Activated CD4-positive, alpha-beta T cell treated with anti-CD3 and anti-CD28 coated beads for 36 hours (primary cell): ENCODE measurements at regions of chr19 and their contacts with region 1.

Region 1: DNA sequence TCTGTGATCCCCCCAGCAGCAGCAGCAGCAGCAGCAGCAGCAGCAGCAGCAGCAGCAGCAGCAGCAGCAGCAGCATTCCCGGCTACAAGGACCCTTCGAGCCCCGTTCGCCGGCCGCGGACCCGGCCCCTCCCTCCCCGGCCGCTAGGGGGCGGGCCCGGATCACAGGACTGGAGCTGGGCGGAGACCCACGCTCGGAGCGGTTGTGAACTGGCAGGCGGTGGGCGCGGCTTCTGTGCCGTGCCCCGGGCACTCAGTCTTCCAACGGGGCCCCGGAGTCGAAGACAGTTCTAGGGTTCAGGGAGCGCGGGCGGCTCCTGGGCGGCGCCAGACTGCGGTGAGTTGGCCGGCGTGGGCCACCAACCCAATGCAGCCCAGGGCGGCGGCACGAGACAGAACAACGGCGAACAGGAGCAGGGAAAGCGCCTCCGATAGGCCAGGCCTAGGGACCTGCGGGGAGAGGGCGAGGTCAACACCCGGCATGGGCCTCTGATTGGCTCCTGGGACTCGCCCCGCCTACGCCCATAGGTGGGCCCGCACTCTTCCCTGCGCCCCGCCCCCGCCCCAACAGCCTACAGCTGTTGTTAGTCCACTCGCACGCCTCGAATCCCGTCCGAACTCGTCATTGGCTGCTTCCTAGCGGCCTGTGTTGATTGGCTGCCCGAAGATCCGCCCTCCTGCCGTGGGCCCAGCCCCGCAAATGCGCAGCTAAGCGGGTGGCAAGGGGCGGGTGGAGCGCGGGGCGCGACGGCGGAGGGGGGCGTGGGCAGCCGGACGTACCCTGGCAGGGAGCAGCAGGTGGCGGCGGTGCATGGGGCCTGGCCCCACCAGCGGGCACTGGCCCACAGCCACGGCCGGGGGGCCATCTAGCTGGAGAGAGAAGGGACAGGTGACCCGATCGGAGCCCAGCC is 1.4 kb upstream of the SIX5 start:
- DNase-seq: peak; percentile 93
- ATAC-seq: peak; percentile 68
- H3K4me3 Mint-ChIP-seq: peak overlapping the region; percentile 78
- H3K27ac Mint-ChIP-seq: no peak overlapping the region
- H3K4me1 Mint-ChIP-seq: peaks cover 10% of the 10 kb centered on the region
- H3K27me3 Mint-ChIP-seq: peaks cover 10% of the 10 kb centered on the region

Region 2: GRCh38 chr19:45636902-45637301 is 133.5 kb before region 1 on chr19:
- CTCF ChIA-PET with region 1: no interaction called
- POLR2A ChIA-PET with region 1: no interaction called
- intact Hi-C with region 1: no loop called
- DNase-seq: no peak
- ATAC-seq: no peak
- H3K4me3 Mint-ChIP-seq: no peak overlapping the region
- H3K27ac Mint-ChIP-seq: no peak overlapping the region
- H3K4me1 Mint-ChIP-seq: peaks cover 33% of the 10 kb centered on the region
- H3K27me3 Mint-ChIP-seq: no peaks in the 10 kb centered on the region

Region 3: GRCh38 chr19:45717166-45717982 is 53.1 kb before region 1 on chr19:
- CTCF ChIA-PET with region 1: interaction called, 9 read pairs
- POLR2A ChIA-PET with region 1: interaction called, 3 read pairs
- intact Hi-C with region 1: loop called (anchors 1 to 5 kb)
- DNase-seq: peak; percentile 99
- ATAC-seq: peak; percentile 97
- H3K4me3 Mint-ChIP-seq: peak overlapping the region; percentile 93
- H3K27ac Mint-ChIP-seq: peak overlapping the region; percentile 94
- H3K4me1 Mint-ChIP-seq: peaks cover 40% of the 10 kb centered on the region
- H3K27me3 Mint-ChIP-seq: no peaks in the 10 kb centered on the region

Region 4: GRCh38 chr19:45792470-45793177 is 22.2 kb after region 1 on chr19 and contains the start of gene DMWD:
- CTCF ChIA-PET with region 1: interaction called, 126 read pairs
- POLR2A ChIA-PET with region 1: interaction called, 11 read pairs
- intact Hi-C with region 1: loop called in 1 of 2 experiments (anchors 1 kb)
- DNase-seq: peak; percentile 100
- ATAC-seq: peak; percentile 93
- H3K4me3 Mint-ChIP-seq: peak within 1 kb of the TSS; percentile 95
- H3K27ac Mint-ChIP-seq: peak within 1 kb of the TSS; percentile 75
- H3K4me1 Mint-ChIP-seq: peaks cover 30% of the 10 kb centered on the region
- H3K27me3 Mint-ChIP-seq: peaks cover 16% of the 10 kb centered on the region
- total RNA-seq, gene DMWD: 31.1 to 35.1 TPM

Region 5: DNA sequence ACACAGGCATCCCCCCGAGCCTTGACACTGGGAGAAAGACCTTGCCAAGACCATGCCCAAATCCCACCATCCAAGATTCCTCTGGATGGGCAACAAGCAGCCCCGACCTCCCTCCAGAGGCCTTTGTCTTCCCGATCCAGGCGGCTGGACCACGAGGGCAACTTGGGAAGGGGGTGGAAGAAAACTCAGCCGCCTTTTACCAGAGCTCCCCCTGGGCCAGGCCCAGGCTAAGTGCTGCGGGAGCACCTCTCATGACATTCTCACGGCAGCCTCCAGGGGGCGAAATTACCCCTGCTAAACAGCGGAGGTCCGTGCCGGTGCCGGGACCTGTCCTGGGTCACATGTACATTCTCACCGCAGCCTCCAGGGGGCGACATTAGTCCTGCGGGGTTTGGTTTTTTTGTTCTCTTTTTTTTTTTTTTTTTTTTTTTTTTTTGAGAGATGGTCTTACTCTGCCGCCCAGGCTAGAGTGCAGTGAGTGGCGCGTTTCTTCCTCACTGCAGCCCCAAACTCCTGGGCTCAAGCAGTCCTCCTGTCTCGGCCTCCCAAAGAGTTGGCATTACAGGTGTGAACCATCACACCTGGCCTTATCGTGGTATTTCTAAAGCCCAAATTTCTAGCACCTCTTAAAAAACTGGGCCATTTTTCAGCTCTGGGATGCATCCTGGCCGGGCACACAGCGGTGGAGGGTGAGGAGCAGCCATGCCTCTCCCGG is 46.7 kb after region 1 on chr19:
- CTCF ChIA-PET with region 1: interaction called, 16 read pairs
- POLR2A ChIA-PET with region 1: interaction called, 4 read pairs
- intact Hi-C with region 1: loop called in 1 of 2 experiments (anchors 1 kb)
- DNase-seq: peak; percentile 99
- ATAC-seq: peak; percentile 100
- H3K4me3 Mint-ChIP-seq: no peak overlapping the region
- H3K27ac Mint-ChIP-seq: no peak overlapping the region
- H3K4me1 Mint-ChIP-seq: peaks cover 7% of the 10 kb centered on the region
- H3K27me3 Mint-ChIP-seq: peaks cover 10% of the 10 kb centered on the region

Region 6: DNA sequence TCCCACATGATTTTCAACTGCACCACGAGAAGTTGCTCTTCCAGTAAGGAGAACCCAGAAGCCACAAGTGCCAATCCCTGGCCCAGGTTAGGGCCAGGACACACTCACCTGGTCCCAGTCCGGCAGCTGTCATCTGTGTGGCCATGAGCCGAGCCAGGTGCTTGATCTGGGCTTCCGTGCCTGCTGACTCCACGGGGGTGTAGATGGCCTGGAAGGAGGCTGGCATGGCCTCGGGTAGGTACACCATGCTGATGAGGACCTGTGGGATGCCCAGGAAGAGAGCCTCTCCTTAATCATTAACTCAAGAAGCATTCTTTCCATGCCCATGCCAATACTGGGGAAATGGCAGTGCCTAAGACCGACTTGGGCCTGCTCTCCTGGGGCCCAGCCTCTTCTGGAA is 64.5 kb after region 1 on chr19:
- CTCF ChIA-PET with region 1: no interaction called
- POLR2A ChIA-PET with region 1: no interaction called
- intact Hi-C with region 1: no loop called
- DNase-seq: no peak
- ATAC-seq: no peak
- H3K4me3 Mint-ChIP-seq: no peak overlapping the region
- H3K27ac Mint-ChIP-seq: no peak overlapping the region
- H3K4me1 Mint-ChIP-seq: no peaks in the 10 kb centered on the region
- H3K27me3 Mint-ChIP-seq: no peaks in the 10 kb centered on the region

Region 7: GRCh38 chr19:45902651-45903625 is 132.5 kb after region 1 on chr19:
- CTCF ChIA-PET with region 1: interaction called, 6 read pairs
- POLR2A ChIA-PET with region 1: no interaction called
- intact Hi-C with region 1: loop called in 1 of 2 experiments (anchors 1 kb)
- DNase-seq: peak; percentile 100
- ATAC-seq: peak; percentile 88
- H3K4me3 Mint-ChIP-seq: peak overlapping the region; percentile 88
- H3K27ac Mint-ChIP-seq: peak overlapping the region; percentile 75
- H3K4me1 Mint-ChIP-seq: peaks cover 16% of the 10 kb centered on the region
- H3K27me3 Mint-ChIP-seq: no peaks in the 10 kb centered on the region

Region 8: DNA sequence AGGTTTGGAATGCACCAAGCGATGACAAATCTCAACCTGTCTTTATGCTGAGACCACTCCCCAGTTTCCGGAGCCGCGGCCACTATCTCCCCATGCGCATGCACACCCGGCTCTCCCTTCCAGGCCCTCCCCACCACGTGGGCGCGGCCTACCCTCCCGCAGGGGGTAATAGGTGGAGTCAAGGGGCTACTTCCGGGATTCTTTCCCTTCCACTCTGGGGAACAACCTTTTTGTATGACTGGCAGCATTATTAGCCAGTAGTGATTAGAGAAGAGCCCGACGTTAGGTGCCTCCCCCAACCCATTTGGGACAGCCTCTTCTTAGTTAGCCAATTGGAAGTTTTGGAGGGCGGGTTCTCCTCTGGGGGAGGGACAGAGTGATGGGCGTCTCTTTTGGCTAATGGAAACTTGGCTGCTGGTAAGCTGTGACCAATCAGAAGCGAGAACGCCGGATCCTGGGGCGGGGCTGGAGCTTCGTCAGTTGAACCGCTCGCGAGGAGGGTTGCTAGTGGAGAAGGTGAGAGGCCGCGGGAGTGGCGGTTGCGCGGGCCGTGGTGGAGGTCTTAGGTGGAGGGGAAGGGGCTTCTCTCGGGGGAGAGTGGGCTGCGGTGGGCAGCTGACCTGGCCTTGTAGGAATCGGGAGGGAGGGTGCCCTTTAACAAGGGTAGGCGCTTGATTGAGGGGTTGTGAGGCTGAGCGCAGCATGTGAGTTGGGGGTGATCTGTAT is 224.7 kb after region 1 on chr19 and contains the start of gene CCDC61:
- CTCF ChIA-PET with region 1: interaction called, 3 read pairs
- POLR2A ChIA-PET with region 1: no interaction called
- intact Hi-C with region 1: loop called in 1 of 2 experiments (anchors 1 kb)
- DNase-seq: peak; percentile 96
- ATAC-seq: peak; percentile 98
- H3K4me3 Mint-ChIP-seq: no peak within 1 kb of the TSS
- H3K27ac Mint-ChIP-seq: no peak within 1 kb of the TSS
- H3K4me1 Mint-ChIP-seq: peaks cover 22% of the 10 kb centered on the region
- H3K27me3 Mint-ChIP-seq: peaks cover 7% of the 10 kb centered on the region
- total RNA-seq, gene CCDC61: 22.4 to 26.2 TPM

Region 9: GRCh38 chr19:46346821-46347571 is 576.5 kb after region 1 on chr19 and contains the start of gene PPP5C:
- CTCF ChIA-PET with region 1: no interaction called
- POLR2A ChIA-PET with region 1: interaction called, 10 read pairs
- intact Hi-C with region 1: no loop called
- DNase-seq: peak; percentile 94
- ATAC-seq: peak; percentile 74
- H3K4me3 Mint-ChIP-seq: peak within 1 kb of the TSS; percentile 90
- H3K27ac Mint-ChIP-seq: peak within 1 kb of the TSS; percentile 91
- H3K4me1 Mint-ChIP-seq: peaks cover 41% of the 10 kb centered on the region
- H3K27me3 Mint-ChIP-seq: no peaks in the 10 kb centered on the region
- total RNA-seq, gene PPP5C: 100.0 to 129 TPM